OCI-LY7 (cell line): ENCODE measurements at regions of chr15 and their contacts with region 1.

Region 1: DNA sequence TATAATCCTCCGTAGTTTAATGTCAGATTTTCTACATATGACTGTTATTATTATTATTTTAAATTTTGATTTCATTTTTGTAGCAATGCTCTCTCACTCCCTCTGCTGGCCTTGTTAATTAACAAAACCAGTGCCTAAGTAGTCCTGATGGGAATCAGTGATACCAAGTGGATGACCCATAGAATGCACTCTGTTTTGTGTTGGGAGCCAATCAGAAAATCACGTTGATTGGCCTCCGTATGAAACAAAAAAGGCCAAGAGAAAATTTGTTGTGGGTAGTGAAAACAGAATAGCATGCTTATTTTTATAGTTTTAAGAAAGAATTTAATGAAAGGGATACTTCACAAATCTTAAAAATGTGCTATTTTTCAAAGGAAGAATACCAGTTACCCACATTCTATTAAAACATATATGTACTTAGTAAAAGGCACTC is 34.4 kb upstream of the MEIS2 start:
- DNase-seq: peak; percentile 46
- H3K4me3 ChIP-seq: no peak overlapping the region
- H3K27ac ChIP-seq: no peak overlapping the region
- H3K4me1 ChIP-seq: no peaks in the 10 kb centered on the region
- CTCF ChIP-seq: peak; percentile 85

Region 2: DNA sequence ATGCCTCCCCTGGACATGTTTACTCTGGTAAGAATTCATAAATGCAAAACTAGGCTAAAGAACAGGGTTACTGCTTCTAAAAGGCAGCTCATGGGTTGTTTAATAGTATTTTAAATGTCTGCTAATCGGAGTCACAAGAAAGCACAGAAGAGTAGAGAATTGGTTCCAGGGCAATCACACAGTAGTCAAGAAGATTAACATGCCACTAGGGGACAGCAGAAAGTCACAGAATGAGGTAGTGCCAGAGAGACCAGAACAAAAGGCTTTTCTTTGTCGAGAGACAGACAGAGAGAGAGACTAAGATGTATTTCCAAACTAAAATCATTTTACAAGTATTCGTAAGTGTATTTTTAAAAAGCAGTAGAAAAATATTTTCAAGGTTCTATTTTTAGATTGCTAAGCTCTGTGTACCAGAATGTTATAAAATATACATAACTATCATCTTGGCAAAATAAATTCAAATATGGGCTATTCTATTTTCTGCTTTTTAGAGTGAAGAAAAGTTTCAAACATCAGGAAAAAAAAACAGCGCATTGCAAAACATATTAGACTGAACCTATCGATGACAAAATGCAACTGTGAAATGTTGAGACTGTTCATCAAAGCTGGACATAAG is 633.5 kb before region 1 on chr15:
- CTCF ChIA-PET with region 1: no interaction called
- POLR2A ChIA-PET with region 1: no interaction called
- intact Hi-C with region 1: loop called (anchors 10 kb)
- DNase-seq: peak; percentile 49
- H3K4me3 ChIP-seq: no peak overlapping the region
- H3K27ac ChIP-seq: no peak overlapping the region
- H3K4me1 ChIP-seq: no peaks in the 10 kb centered on the region
- CTCF ChIP-seq: peak; percentile 86

Region 3: DNA sequence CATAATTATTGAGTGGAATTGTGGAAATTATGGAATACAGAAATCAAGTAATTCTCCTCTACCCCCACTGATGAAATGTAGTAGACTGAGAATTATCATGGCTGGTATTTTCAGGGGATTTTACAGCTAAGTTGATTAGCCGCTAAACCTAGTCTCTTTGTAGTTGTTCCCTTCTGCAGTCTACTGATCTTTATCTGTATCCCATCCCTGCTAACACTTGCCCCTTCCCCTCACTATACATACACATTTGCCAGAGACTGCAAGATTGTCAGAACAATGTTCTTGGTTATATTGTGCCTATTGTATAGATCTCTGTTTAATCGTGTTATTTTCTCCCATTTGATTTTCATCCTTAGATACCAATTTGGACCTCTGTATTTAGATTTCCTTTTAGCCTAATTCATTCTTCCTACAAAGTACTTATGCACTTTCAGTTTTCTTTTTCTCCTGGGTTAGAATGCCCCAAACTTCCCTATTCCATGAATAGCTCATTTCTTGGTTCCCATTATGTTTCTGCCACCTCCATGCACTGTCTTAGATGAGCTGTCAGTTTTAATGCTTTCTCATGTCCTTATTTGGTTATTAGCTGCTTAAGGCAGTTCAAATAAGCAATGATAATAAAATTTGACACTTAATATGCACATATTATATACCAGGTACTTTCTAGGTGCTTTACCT is 468.3 kb before region 1 on chr15:
- CTCF ChIA-PET with region 1: no interaction called
- POLR2A ChIA-PET with region 1: no interaction called
- intact Hi-C with region 1: no loop called
- DNase-seq: no peak
- H3K4me3 ChIP-seq: no peak overlapping the region
- H3K27ac ChIP-seq: no peak overlapping the region
- H3K4me1 ChIP-seq: no peaks in the 10 kb centered on the region
- CTCF ChIP-seq: no peak